ENCODE measurements at regions of chr12 and their contacts with region 1.

Region 1: DNA sequence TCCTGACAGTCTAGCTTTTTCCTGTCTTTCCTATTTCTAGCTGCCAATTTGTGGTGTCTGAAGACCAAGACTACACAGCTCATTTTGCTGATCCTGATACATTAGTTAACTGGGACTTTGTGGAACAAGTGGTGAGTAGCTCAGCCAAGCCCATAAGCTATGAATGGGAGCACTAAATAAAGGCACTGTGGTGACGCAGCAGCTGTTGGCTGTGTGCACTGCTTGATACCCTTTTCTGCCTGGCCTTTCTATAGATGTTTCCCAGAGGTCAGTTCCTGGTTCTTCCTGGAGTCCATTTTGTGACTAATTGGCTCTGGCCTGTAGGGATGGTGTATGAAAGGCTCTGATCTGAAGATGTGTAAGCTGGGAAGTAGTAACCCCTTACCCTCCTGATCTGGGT is 20.5 kb downstream of the RNF10 start:
- DNase-seq: no peak
- ATAC-seq: no peak
- H3K4me3 Mint-ChIP-seq: no peak overlapping the region
- H3K27ac Mint-ChIP-seq: no peak overlapping the region
- H3K4me1 Mint-ChIP-seq: peaks cover 13% of the 10 kb centered on the region
- H3K27me3 Mint-ChIP-seq: no peaks in the 10 kb centered on the region

Region 2: DNA sequence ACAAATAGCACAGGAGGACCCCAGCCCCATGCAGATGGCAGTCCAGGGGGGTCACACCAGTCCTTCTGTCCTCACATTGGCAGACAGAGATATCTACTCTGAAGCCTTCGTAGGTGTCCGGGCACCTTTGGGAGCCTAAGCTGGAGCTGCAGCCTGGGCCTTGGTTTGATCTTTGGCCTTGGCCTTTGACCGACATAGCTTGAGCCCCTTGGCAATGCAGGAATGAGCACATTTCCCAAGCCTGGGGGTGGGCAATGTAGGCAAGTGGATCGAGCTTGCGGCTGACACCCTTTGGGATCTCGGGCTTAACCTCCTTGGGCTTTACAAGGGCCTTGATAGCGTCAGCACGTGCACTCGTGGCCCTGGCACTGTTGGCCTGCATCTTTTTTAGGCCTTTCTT is 32.1 kb before region 1 on chr12:
- CTCF ChIA-PET with region 1: no interaction called
- POLR2A ChIA-PET with region 1: no interaction called
- intact Hi-C with region 1: no loop called
- DNase-seq: no peak
- ATAC-seq: no peak
- H3K4me3 Mint-ChIP-seq: no peak overlapping the region
- H3K27ac Mint-ChIP-seq: no peak overlapping the region
- H3K4me1 Mint-ChIP-seq: peaks cover 4% of the 10 kb centered on the region
- H3K27me3 Mint-ChIP-seq: no peaks in the 10 kb centered on the region

Region 3: GRCh38 chr12:120534203-120534702 is 20.4 kb before region 1 on chr12 and contains the start of gene RNF10:
- CTCF ChIA-PET with region 1: interaction called, 13 read pairs
- POLR2A ChIA-PET with region 1: interaction called, 3 read pairs
- intact Hi-C with region 1: no loop called
- DNase-seq: peak; percentile 82
- ATAC-seq: peak; percentile 67
- H3K4me3 Mint-ChIP-seq: peak within 1 kb of the TSS; percentile 87
- H3K27ac Mint-ChIP-seq: peak within 1 kb of the TSS; percentile 95
- H3K4me1 Mint-ChIP-seq: peaks cover 46% of the 10 kb centered on the region
- H3K27me3 Mint-ChIP-seq: no peaks in the 10 kb centered on the region
- total RNA-seq, gene RNF10: 177 to 184 TPM